CD4-positive, alpha-beta memory T cell (primary cell): ENCODE measurements at regions of chr6 and their contacts with region 1.

Region 1: GRCh38 chr6:156776840-156777576 is at the start of gene ARID1B:
- DNase-seq: peak; percentile 84 to 87 (median 86)
- H3K4me3 ChIP-seq: peak within 1 kb of the TSS; percentile 54 to 72
- H3K4me3 Mint-ChIP-seq: peak within 1 kb of the TSS; percentile 92 to 99 (median 96)
- H3K27ac ChIP-seq: peak within 1 kb of the TSS; percentile 84
- H3K27ac Mint-ChIP-seq: peak within 1 kb of the TSS; percentile 97 to 99 (median 99)
- H3K4me1 ChIP-seq: peaks cover 21% of the 10 kb centered on the region
- H3K4me1 Mint-ChIP-seq: peaks cover 19 to 44% (median 30%) of the 10 kb centered on the region in 4 donors
- H3K27me3 ChIP-seq: no peaks in the 10 kb centered on the region
- H3K27me3 Mint-ChIP-seq: no peaks in the 10 kb centered on the region
- total RNA-seq, gene ARID1B: 118 to 131 TPM

Region 2: DNA sequence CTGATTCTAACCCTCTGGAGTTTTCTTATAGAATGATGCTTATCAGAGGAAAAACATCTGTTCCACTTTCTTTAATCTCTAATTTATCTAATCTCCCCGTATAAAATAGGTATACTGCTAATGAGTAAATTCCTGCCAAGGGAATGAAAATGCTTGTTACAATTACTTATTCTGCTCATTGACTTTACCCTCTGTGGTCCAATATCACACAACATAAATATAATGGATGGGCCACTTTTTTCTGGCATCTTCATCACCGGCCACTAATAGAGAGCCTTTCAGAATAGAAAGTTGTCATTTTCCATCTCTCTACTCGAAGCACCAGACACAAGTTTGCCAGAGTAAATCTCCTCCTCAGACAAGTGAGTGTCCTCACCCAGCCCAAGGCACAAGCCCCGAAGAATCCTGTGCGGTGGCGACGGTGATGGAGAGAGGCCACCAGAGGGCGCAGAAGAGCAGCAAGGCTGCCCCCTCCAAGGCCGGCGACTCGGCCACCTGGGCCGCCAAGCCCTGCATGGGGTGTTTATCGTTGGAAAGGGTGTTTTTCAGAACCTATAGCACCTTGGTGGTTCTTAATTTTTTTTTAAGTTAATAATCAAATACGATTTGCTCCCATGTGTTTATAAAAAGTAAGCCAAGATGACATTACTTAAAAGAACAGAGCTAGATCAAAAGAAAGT is 212.7 kb before region 1 on chr6:
- CTCF ChIA-PET with region 1: no interaction called
- POLR2A ChIA-PET with region 1: no interaction called
- intact Hi-C with region 1: loop called (anchors 2 kb)
- DNase-seq: peak; percentile 58 to 66 (median 63)
- H3K4me3 ChIP-seq: no peak overlapping the region
- H3K4me3 Mint-ChIP-seq: peak overlapping the region in 1 of 8 donors; percentile 12
- H3K27ac ChIP-seq: no peak overlapping the region
- H3K27ac Mint-ChIP-seq: peak overlapping the region in 1 of 7 donors; percentile 24
- H3K4me1 ChIP-seq: peaks cover 7% of the 10 kb centered on the region
- H3K4me1 Mint-ChIP-seq: peaks cover 0 to 4% (median 1%) of the 10 kb centered on the region in 4 donors
- H3K27me3 ChIP-seq: no peaks in the 10 kb centered on the region
- H3K27me3 Mint-ChIP-seq: peaks cover 6 to 13% of the 10 kb centered on the region in 2 donors

Region 3: DNA sequence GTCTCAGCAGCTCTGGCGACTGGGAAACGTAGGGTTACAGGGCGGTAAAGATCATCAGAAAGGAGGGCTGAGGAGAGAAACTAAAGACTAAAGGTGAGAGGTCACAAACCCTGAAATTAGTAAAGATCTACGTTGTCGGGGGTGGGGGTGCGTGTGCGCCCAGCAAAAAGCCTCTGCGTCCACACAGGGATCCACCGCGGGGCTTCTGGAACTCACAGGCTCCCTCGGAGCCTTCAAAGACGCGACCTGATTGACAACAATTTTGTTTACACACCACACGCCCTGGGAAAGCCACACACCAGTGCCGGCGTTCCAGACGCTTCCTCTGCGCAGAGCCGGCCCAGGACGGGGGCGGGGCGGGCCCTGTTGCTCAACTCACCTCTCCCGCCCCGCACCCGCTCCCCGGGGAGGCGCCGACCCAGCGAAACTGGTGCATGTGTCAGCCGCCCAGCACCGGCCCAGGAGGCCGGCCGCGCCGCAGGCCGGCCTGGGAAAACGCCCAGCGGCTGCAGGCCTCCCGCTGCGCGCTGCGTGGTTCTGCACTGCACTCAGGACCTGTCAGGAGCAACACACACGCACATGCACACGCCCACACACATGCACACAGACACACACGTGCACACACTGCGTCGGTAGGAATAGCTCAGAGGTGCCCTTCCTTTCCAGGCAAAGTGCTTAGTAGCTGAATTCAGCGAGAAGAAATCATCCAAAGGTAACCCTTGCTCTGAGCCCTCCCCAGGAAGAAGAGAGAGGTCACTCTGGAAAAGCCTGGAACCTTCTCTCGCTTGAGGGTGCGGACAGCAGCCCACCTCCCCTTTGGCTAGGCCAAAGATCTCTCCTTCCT is 57.1 kb before region 1 on chr6:
- CTCF ChIA-PET with region 1: no interaction called
- POLR2A ChIA-PET with region 1: interaction called, 51 read pairs
- intact Hi-C with region 1: loop called (anchors 1 kb)
- DNase-seq: peak; percentile 71 to 81 (median 75)
- H3K4me3 ChIP-seq: peak overlapping the region; percentile 71 to 84
- H3K4me3 Mint-ChIP-seq: peak overlapping the region; percentile 87 to 94 (median 90)
- H3K27ac ChIP-seq: peak overlapping the region; percentile 43
- H3K27ac Mint-ChIP-seq: peak overlapping the region; percentile 79 to 95 (median 93)
- H3K4me1 ChIP-seq: peaks cover 8% of the 10 kb centered on the region
- H3K4me1 Mint-ChIP-seq: peaks cover 12 to 19% (median 17%) of the 10 kb centered on the region in 4 donors
- H3K27me3 ChIP-seq: no peaks in the 10 kb centered on the region
- H3K27me3 Mint-ChIP-seq: no peaks in the 10 kb centered on the region

Region 4: DNA sequence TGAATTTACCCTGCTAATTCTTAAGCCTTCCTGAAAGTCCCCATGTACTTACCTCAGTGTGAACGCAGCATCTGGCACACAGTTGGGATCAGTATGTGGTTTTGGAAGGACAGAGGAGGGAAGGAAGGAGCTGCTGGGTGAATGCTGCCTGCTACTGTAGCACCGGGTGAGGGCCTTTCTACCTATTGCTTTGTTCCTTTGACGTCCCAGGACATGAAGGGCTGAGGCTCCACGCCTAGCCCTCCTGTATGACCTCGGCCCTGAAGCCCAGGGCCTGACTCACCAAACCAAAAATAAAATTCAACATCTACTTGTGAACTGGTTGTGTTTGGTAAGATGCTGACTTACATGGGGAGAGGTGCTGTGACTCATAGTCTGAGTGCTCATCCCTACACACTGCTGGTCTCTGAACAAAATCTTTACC is 51.3 kb after region 1 on chr6:
- CTCF ChIA-PET with region 1: no interaction called
- POLR2A ChIA-PET with region 1: interaction called, 5 read pairs
- intact Hi-C with region 1: loop called (anchors 5 kb)
- DNase-seq: no peak
- H3K4me3 ChIP-seq: no peak overlapping the region
- H3K4me3 Mint-ChIP-seq: peak overlapping the region in 2 of 8 donors; percentile 6 to 27
- H3K27ac ChIP-seq: no peak overlapping the region
- H3K27ac Mint-ChIP-seq: peak overlapping the region in 3 of 7 donors; percentile 9 to 38 (median 21)
- H3K4me1 ChIP-seq: peaks cover 53% of the 10 kb centered on the region
- H3K4me1 Mint-ChIP-seq: peaks cover 55 to 90% (median 72%) of the 10 kb centered on the region in 4 donors
- H3K27me3 ChIP-seq: no peaks in the 10 kb centered on the region
- H3K27me3 Mint-ChIP-seq: no peaks in the 10 kb centered on the region

Region 5: GRCh38 chr6:157021344-157021992 is 244.5 kb after region 1 on chr6:
- CTCF ChIA-PET with region 1: no interaction called
- POLR2A ChIA-PET with region 1: interaction called, 62 read pairs
- intact Hi-C with region 1: loop called (anchors 1 kb)
- DNase-seq: peak; percentile 88 to 93 (median 91)
- H3K4me3 ChIP-seq: peak overlapping the region; percentile 54 to 86
- H3K4me3 Mint-ChIP-seq: peak overlapping the region; percentile 95 to 98 (median 96)
- H3K27ac ChIP-seq: peak overlapping the region; percentile 98
- H3K27ac Mint-ChIP-seq: peak overlapping the region; percentile 97 to 100 (median 99)
- H3K4me1 ChIP-seq: peaks cover 31% of the 10 kb centered on the region
- H3K4me1 Mint-ChIP-seq: peaks cover 30 to 55% (median 44%) of the 10 kb centered on the region in 4 donors
- H3K27me3 ChIP-seq: no peaks in the 10 kb centered on the region
- H3K27me3 Mint-ChIP-seq: no peaks in the 10 kb centered on the region